ENCODE measurements at regions of chr15 and their contacts with region 1.

Region 1: DNA sequence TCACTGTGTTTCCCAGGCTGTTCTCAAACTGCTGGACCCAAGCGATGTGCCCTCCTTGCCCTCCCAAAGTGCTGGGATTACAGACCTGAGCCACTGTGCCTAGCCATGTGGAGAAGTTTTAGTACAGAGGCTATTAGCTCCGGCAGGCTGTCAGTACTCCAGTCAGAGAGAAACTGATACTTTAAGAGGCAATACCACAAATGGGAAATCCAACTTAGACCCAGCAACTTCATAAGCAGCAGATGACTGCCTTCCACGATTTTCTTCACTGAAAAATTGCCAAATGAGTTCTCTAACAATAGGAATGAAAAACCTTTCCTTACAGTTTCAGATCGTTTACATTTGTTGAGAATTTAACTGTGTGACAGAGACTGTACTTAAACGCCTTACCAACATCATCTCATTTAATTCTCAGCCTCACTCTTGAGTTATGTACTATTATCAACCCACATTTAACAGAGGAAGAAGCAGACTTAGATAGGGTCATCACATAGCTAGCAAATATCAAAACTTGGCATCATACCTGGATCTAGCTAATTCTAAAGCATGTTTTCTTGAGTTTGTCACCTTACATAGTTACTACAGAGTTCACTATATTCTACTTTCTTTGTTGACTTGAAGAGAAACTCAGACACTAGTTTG is 127.4 kb downstream of the TCF12 start:
- DNase-seq: peak; percentile 50
- ATAC-seq: peak; percentile 97
- H3K4me3 ChIP-seq: no peak overlapping the region
- H3K27ac ChIP-seq: peak overlapping the region; percentile 20
- H3K4me1 ChIP-seq: peaks cover 9% of the 10 kb centered on the region
- H3K27me3 ChIP-seq: no peaks in the 10 kb centered on the region
- CTCF ChIP-seq: no peak
- EP300 ChIP-seq: 0 out of 4 replicates have a peak, but pooled peaks of 1 of the 2 experiments have one; percentile 12
- POLR2A ChIP-seq: no peak
- RAD21 ChIP-seq: no peak

Region 2: DNA sequence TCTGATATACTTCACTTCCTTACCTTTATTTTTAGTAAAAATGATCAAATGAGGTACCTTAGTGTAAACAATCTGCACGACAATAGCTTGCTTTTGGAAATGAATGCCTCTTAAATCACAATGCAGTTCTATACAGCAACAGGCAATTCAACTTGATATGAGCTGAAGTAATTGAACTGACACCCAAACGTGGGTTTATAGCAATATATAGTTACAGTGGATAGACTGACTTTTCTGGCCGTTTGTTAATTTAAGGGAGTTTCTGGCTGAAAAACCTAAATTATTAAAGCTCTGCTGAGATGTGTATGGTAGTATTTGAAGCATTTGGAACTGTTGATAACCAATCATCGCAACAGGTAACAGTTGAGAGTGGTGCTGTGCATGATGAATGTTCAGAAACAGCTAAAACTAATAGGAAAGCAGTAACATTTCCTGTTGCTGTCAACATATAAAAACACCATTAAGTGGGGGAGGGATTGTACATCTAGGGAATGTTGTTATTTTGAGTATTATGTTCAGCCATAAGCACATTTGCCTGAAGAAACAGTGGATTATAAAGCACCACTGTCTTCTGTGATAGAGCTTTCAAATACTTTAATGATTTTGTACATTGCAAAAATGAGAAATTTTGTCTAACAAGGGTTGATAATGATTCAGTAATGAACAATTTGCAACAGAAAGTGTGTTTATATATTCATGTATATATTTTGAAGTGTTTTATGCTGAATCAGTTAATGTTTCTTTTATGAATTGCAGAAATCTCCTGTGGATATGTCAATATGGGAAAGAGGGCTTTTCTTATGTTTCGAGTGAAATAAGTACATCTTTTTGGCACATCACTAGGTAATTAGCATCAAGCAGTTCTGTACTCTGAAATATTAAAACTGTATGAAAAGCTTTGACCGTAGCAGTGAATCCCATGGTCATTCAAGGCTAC is 48.7 kb after region 1 on chr15:
- CTCF ChIA-PET with region 1: no interaction called
- POLR2A ChIA-PET with region 1: no interaction called
- RAD21 ChIA-PET with region 1: no interaction called
- SMC1A ChIA-PET with region 1: no interaction called
- in situ Hi-C with region 1: no loop called
- intact Hi-C with region 1: loop called (anchors 1 kb)
- DNase-seq: no peak
- ATAC-seq: no peak
- H3K4me3 ChIP-seq: no peak overlapping the region
- H3K27ac ChIP-seq: no peak overlapping the region
- H3K4me1 ChIP-seq: peaks cover 18% of the 10 kb centered on the region
- H3K27me3 ChIP-seq: no peaks in the 10 kb centered on the region
- CTCF ChIP-seq: no peak
- EP300 ChIP-seq: no peak
- POLR2A ChIP-seq: no peak
- RAD21 ChIP-seq: no peak

Region 3: DNA sequence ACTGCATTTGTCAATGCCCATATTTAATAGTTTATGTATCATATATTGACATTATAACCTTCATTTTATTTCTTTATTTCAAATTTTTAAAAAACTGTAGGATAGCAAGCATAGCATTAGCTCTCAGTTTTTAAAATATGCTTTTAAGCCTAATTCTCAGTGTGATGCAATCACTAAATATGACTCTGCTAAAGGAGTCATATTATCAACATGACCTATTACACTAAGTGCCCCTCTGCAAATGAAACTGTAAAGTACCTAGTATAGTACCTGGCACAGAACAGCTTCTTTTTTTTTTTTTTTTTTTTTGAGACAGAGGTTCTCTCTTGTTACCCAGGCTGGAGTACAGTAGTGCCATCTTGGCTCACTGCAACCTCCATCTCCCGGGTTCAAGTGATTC is 151.0 kb after region 1 on chr15:
- CTCF ChIA-PET with region 1: no interaction called
- POLR2A ChIA-PET with region 1: no interaction called
- RAD21 ChIA-PET with region 1: no interaction called
- SMC1A ChIA-PET with region 1: no interaction called
- in situ Hi-C with region 1: no loop called
- intact Hi-C with region 1: no loop called
- DNase-seq: no peak
- ATAC-seq: no peak
- H3K4me3 ChIP-seq: no peak overlapping the region
- H3K27ac ChIP-seq: no peak overlapping the region
- H3K4me1 ChIP-seq: no peaks in the 10 kb centered on the region
- H3K27me3 ChIP-seq: no peaks in the 10 kb centered on the region
- CTCF ChIP-seq: no peak
- EP300 ChIP-seq: no peak
- POLR2A ChIP-seq: no peak
- RAD21 ChIP-seq: no peak

Measured in GM12878 (cell line).